ENCODE measurements at regions of chr7 and their contacts with region 1.

Region 1: DNA sequence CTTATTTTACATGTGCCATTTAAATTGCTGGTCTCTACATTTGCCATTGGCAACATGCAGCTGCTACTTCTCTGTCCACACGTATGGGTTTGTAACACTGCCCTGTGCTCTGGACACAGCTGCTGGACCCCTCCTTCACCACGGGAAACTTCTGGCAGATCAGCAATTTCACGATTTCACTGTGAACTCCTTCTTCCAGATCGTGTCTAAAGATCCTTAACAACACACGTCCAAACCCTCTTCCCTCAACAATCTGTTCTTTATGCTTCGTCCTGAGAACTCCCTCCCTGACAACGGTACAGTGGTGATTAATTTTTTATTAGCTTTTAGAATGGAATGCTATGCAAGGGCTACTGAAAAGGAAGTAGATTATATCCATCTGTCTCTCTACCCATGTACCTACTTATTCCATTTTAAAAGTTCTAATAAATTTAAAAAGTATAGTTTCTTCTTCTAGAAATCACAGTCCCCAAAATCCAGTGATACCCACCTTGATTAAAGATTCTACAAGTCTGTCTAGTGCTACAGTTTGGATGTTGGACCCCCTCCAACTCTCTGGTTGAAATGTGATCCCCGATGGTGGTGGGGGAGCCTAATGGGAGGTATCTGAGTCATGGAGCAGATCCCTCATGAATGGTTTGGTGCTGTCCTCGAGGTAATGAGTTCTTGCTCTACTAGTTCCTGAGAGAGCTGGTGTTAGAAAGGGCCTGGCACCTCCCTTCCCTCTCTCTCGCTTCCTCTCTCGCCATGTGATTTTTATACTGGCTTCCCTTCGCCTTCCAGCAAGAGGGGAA is 81.0 kb downstream of the KIAA1549 start:
- DNase-seq: no peak
- H3K4me3 Mint-ChIP-seq: no peak overlapping the region
- H3K27ac Mint-ChIP-seq: no peak overlapping the region
- H3K4me1 Mint-ChIP-seq: peaks cover 53% of the 10 kb centered on the region
- H3K27me3 Mint-ChIP-seq: peaks cover 16% of the 10 kb centered on the region

Region 2: GRCh38 chr7:138935465-138936011 is 35.3 kb after region 1 on chr7:
- intact Hi-C with region 1: no loop called
- DNase-seq: no peak
- H3K4me3 Mint-ChIP-seq: no peak overlapping the region
- H3K27ac Mint-ChIP-seq: no peak overlapping the region
- H3K4me1 Mint-ChIP-seq: peaks cover 1% of the 10 kb centered on the region
- H3K27me3 Mint-ChIP-seq: peaks cover 20% of the 10 kb centered on the region

Region 3: DNA sequence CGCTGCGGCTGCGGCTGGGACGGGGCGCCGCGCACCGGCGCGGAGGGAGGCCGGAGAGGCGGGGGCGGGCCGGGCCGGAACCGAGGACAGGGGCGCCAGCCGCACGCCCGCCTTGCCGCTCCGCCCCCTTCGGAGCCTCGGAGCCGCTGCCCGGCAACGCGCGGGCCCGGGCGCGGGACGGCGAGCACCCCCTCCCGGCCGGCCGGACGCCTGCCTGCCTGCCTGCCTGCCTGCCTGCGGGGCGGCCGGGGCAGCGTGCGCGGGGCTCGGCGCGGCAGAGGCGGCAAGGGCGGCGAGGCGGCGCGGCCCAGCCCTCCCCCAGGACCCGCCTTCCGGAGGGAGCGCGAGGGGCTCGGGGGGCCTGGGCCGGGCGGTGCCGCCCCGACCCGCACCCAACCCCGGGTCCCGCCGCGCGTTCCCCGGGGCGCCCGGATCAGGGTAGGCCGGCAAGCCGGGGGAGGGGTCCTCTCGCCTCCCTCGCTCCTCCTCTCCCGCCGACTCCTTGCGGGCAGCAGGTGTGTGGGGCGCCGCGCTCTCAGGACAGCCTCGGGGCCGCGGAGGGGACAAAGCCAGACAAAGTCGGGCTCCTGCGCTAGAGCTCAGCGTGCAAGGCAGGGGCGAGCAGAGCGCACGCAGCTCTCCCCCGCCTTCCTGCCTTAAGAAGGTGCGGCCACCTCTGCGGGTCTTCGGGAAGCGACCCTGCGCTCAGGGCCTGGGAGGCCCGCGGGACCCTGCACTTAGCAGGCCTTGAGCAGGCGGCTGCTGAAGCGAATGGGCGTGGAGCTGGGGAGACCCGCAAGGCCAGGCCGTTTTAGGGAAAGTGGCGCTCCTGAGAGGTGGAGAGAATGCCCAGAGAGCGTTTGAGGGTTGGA is 81.3 kb after region 1 on chr7 and contains the start of gene KIAA1549:
- intact Hi-C with region 1: loop called (anchors 5 kb)
- DNase-seq: peak; percentile 41
- H3K4me3 Mint-ChIP-seq: peak within 1 kb of the TSS; percentile 81
- H3K27ac Mint-ChIP-seq: peak within 1 kb of the TSS; percentile 47
- H3K4me1 Mint-ChIP-seq: peaks cover 15% of the 10 kb centered on the region
- H3K27me3 Mint-ChIP-seq: peaks cover 61% of the 10 kb centered on the region
- total RNA-seq, gene KIAA1549: 1.3 TPM in 2 replicates

Measured in activated T-helper 2 cell treated with anti-CD3 and anti-CD28 coated beads, Interferon-gamma antibody, Interleukin-2, Interleukin-4, amounts not matched to agents 10 μg/mL and 5 μg/mL and 100 μg/mL, durations not matched to agents 14 hours and 24 hours and 36 hours (primary cell).